ENCODE measurements at regions of chr17 and their contacts with region 1.

Region 1: GRCh38 chr17:64661976-64662773 is at the start of gene SMURF2:
- DNase-seq: peak; percentile 74
- H3K4me3 Mint-ChIP-seq: peak within 1 kb of the TSS; percentile 95
- H3K27ac Mint-ChIP-seq: peak within 1 kb of the TSS; percentile 97
- H3K4me1 Mint-ChIP-seq: peaks cover 28% of the 10 kb centered on the region
- H3K27me3 Mint-ChIP-seq: peaks cover 4% of the 10 kb centered on the region
- total RNA-seq, gene SMURF2: 10.8 and 11.1 TPM in 2 replicates

Region 2: GRCh38 chr17:64496786-64497564 is 165.2 kb before region 1 on chr17 and contains the start of gene POLG2:
- intact Hi-C with region 1: loop called (anchors 1 kb)
- DNase-seq: peak; percentile 94
- H3K4me3 Mint-ChIP-seq: peak within 1 kb of the TSS; percentile 100
- H3K27ac Mint-ChIP-seq: peak within 1 kb of the TSS; percentile 100
- H3K4me1 Mint-ChIP-seq: peaks cover 69% of the 10 kb centered on the region
- H3K27me3 Mint-ChIP-seq: no peaks in the 10 kb centered on the region
- total RNA-seq, gene POLG2: 33.3 and 36.5 TPM in 2 replicates

Region 3: GRCh38 chr17:64635647-64636307 is 26.4 kb before region 1 on chr17:
- intact Hi-C with region 1: no loop called
- DNase-seq: no peak
- H3K4me3 Mint-ChIP-seq: no peak overlapping the region
- H3K27ac Mint-ChIP-seq: peak overlapping the region; percentile 98
- H3K4me1 Mint-ChIP-seq: peaks cover 21% of the 10 kb centered on the region
- H3K27me3 Mint-ChIP-seq: peaks cover 2% of the 10 kb centered on the region

Region 4: DNA sequence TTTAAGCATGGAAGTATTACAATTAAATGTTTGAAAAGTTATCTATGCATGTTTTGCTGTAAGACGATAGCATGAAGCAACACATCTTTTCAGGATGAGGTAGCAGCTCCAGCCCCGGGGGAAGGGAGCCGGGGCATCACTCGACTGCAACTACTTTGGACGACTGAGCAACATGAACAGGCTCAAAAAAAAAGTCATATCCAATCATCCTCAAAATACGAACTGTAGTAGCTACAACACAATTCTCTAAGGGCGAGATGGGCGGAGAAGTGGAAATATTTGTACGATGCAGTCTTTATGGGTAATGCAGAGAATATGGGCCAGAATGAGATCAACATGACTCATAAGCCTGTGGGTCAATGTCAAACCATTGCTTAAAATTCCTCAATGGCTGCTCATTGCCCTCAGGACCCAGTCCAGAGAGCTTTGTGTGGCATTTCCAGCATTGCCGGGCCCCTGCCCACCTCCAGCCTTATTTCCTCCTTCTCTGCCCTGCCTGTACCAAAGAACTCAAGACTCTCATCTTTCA is 17.6 kb after region 1 on chr17:
- intact Hi-C with region 1: no loop called
- DNase-seq: no peak
- H3K4me3 Mint-ChIP-seq: no peak overlapping the region
- H3K27ac Mint-ChIP-seq: no peak overlapping the region
- H3K4me1 Mint-ChIP-seq: no peaks in the 10 kb centered on the region
- H3K27me3 Mint-ChIP-seq: no peaks in the 10 kb centered on the region

Region 5: DNA sequence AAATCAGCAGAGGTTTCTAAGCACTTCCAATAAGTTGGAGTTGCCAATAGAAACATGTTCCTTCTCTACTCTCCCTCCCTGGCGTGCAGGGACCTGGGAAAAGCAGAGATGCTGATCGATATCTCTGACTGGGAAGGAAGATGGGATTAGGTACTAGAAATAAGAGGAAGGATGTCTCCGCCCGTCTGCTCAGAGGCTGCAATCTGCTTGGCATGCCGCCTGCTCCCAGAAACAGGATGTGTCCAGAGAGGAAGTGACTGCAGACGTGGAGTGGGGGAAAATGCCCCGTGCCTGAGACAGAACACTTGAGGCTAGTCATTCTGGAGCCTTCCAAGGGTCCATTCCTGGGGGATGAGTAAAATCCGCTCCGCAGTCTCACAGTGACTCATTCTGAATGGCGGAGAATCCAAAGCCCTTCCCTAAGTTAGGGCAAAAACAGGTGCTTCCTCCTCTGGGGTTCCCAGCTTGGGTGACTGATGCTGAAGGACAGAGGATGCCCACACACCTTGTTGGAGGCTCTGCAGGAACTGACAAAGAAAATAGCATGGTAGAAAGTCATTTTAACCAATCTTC is 44.9 kb after region 1 on chr17:
- intact Hi-C with region 1: loop called (anchors 5 kb)
- DNase-seq: no peak
- H3K4me3 Mint-ChIP-seq: no peak overlapping the region
- H3K27ac Mint-ChIP-seq: no peak overlapping the region
- H3K4me1 Mint-ChIP-seq: peaks cover 47% of the 10 kb centered on the region
- H3K27me3 Mint-ChIP-seq: no peaks in the 10 kb centered on the region

Measured in activated T-helper 1 cell treated with anti-CD3 and anti-CD28 coated beads, Interleukin-12 subunit alpha, Interleukin-12 subunit beta, Interleukin-2, Interleukin-4 antibody, amounts not matched to agents 30 ng/mL and 10 ng/mL and 1 ng/mL, durations not matched to agents 14 hours and 24 hours and 36 hours (primary cell).